MCF 10A (cell line): ENCODE measurements at regions of chr20 and their contacts with region 1.

Region 1: GRCh38 chr20:34312544-34313217 is 9.5 kb upstream of the AHCY start:
- DNase-seq: peak; percentile 91
- H3K4me3 Mint-ChIP-seq: peak overlapping the region; percentile 35
- H3K27ac Mint-ChIP-seq: no peak overlapping the region
- H3K4me1 Mint-ChIP-seq: peaks cover 37% of the 10 kb centered on the region
- H3K27me3 Mint-ChIP-seq: no peaks in the 10 kb centered on the region
- CTCF ChIP-seq: peak; percentile 100

Region 2: DNA sequence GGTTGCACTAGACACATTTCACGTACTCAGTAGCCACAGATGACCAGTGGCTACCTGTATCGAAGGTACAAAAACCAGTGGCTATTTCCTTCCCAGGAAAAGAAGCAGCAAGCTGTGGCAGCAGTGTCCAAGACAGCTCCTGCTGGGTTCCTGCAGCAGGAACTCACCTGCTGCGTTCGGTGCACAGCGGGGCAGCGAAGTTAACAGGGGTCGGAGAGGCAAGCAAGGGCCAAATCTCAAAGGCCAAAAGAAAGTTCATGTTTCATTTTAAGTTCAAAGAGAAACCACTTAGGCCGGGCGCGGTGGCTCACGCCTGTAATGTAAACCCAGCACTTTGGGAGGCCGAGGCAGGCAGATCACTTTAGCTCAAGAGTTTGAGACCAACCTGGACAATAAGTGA is 44.5 kb before region 1 on chr20:
- CTCF ChIA-PET with region 1: no interaction called
- POLR2A ChIA-PET with region 1: no interaction called
- intact Hi-C with region 1: no loop called
- DNase-seq: no peak
- H3K4me3 Mint-ChIP-seq: no peak overlapping the region
- H3K27ac Mint-ChIP-seq: peak overlapping the region; percentile 25
- H3K4me1 Mint-ChIP-seq: no peaks in the 10 kb centered on the region
- H3K27me3 Mint-ChIP-seq: no peaks in the 10 kb centered on the region
- CTCF ChIP-seq: no peak

Region 3: GRCh38 chr20:34295284-34295683 is 17.4 kb before region 1 on chr20:
- CTCF ChIA-PET with region 1: interaction called, 19 read pairs
- POLR2A ChIA-PET with region 1: interaction called, 3 read pairs
- intact Hi-C with region 1: no loop called
- DNase-seq: no peak
- H3K4me3 Mint-ChIP-seq: no peak overlapping the region
- H3K27ac Mint-ChIP-seq: no peak overlapping the region
- H3K4me1 Mint-ChIP-seq: peaks cover 5% of the 10 kb centered on the region
- H3K27me3 Mint-ChIP-seq: no peaks in the 10 kb centered on the region
- CTCF ChIP-seq: no peak

Region 4: GRCh38 chr20:34385464-34385863 is 72.8 kb after region 1 on chr20:
- CTCF ChIA-PET with region 1: interaction called, 20 read pairs
- POLR2A ChIA-PET with region 1: interaction called, 34 read pairs
- intact Hi-C with region 1: loop called (anchors 1 kb)
- DNase-seq: no peak
- H3K4me3 Mint-ChIP-seq: no peak overlapping the region
- H3K27ac Mint-ChIP-seq: no peak overlapping the region
- H3K4me1 Mint-ChIP-seq: peaks cover 20% of the 10 kb centered on the region
- H3K27me3 Mint-ChIP-seq: no peaks in the 10 kb centered on the region
- CTCF ChIP-seq: no peak

Region 5: DNA sequence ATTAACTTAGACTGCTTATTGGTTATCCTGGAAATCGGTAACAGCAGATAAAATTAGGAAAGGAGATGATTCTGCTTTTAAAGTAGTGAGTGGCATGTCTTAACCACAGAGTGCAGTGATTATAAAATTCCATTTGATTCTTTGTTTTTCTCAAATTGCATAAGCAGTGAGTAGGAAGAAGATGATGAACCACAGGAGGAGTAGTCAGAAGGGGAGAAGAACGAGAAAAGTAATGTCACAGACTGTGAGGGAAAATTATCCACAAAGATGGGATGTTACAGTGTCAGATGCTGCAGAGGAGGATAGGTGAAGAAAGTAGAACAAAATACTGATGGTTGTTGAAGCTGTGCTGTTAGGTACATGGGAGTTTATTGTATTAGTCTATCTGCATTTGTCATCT is 113.3 kb after region 1 on chr20:
- CTCF ChIA-PET with region 1: interaction called, 25 read pairs
- POLR2A ChIA-PET with region 1: no interaction called
- intact Hi-C with region 1: no loop called
- DNase-seq: no peak
- H3K4me3 Mint-ChIP-seq: no peak overlapping the region
- H3K27ac Mint-ChIP-seq: peak overlapping the region; percentile 13
- H3K4me1 Mint-ChIP-seq: no peaks in the 10 kb centered on the region
- H3K27me3 Mint-ChIP-seq: no peaks in the 10 kb centered on the region
- CTCF ChIP-seq: no peak

Region 6: GRCh38 chr20:34485068-34485634 is 172.5 kb after region 1 on chr20:
- CTCF ChIA-PET with region 1: interaction called, 48 read pairs
- POLR2A ChIA-PET with region 1: no interaction called
- intact Hi-C with region 1: no loop called
- DNase-seq: no peak
- H3K4me3 Mint-ChIP-seq: no peak overlapping the region
- H3K27ac Mint-ChIP-seq: no peak overlapping the region
- H3K4me1 Mint-ChIP-seq: no peaks in the 10 kb centered on the region
- H3K27me3 Mint-ChIP-seq: no peaks in the 10 kb centered on the region
- CTCF ChIP-seq: no peak

Region 7: DNA sequence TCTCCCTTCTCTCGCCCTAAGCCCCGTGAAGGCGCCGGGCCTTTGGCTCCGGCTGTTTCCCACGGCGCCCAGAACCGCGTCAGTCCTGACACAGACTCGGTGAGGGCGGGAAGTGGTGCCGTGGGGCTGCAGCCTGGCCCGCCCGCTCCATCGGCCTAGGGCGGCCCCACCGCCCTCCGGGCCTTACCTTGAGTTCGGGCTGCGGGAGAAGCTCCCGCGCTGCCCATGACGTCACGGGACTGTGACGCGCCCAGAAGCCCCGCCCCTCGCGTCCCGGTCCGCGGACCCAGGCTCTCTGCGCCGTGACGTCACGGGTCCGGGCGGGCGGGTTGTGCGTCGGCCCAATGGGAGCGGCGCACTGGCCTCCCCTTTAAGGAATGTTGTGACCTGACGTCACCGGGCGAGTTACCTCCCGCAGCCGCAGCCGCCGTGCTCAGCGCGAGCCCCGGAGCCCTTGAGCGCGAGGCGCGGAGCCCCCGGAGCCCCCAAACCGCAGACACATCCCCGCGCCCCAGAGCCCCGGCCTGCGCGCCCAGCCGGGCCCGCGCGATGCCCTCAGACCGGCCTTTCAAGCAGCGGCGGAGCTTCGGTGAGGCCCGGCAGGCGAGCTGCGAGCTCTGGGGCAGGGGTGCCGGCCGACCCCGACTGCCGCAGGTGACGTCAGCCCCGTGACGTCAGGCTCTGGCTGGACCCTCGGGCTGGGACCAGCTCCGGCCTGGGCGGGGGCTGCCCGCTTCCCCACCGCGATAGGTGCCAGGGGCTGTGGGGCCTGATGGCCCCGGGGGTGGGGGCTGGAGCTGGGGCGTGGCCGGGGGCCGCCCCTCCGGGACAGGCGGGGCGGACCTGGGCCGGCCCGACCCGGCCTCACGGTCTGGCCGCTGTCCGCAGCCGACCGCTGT is 245.9 kb after region 1 on chr20 and contains the start of gene MAP1LC3A:
- CTCF ChIA-PET with region 1: interaction called, 10 read pairs
- POLR2A ChIA-PET with region 1: interaction called, 3 read pairs
- intact Hi-C with region 1: no loop called
- DNase-seq: peak; percentile 79
- H3K4me3 Mint-ChIP-seq: peak within 1 kb of the TSS; percentile 91
- H3K27ac Mint-ChIP-seq: peak within 1 kb of the TSS; percentile 85
- H3K4me1 Mint-ChIP-seq: peaks cover 21% of the 10 kb centered on the region
- H3K27me3 Mint-ChIP-seq: no peaks in the 10 kb centered on the region
- CTCF ChIP-seq: no peak
- total RNA-seq, gene MAP1LC3A: 10.5 and 10.7 TPM in 2 replicates